Ovary (tissue), 10 donors: ENCODE measurements at regions of chr20 and their contacts with region 1.

Region 1: DNA sequence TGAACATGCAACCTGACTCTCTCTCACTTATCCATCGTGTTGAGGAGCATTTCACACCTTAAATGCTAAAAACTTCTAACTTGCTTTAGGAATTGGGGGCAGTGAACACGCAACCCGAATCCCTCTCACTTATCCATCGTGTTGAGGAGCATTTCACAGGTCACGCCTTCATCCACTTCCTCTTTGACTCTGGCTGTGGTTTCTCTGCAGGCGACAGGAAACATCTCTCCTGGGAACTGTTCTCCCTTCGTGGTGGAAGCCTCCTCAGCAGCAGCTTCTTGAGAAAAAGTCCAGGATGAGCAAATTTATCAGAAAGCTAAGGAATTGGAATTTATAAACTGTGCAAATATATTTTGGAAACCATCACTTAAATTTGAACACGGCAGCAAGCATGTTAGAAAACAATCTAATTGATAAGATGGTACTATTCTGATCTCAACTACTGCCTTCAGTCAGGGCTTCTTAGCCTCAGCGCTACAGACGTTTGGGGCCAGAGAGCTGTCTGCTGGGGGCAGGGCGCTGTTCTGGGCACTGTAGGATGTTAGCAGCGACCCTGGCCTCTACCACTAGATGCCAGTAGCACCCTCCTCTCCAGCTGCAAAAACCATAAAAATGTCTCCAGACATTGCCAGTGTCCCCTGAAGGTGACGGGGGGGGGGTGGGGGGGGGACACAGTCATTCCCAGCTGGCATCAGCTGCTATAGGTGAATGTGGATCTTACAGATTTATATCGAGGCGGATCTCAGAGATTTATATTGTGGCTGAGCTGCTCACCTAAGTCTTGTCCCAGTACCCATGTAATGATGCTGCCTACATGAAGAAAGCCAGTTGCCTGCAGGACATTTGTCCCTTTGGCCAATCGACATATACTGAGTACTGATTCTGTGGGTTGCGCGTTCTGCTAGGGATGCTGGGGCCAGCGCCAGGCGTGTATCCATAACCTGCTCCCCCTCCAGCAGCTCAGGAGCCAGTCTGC is 26.2 kb downstream of the CTCFL start:
- DNase-seq: no peak
- H3K4me3 ChIP-seq: no peak overlapping the region
- H3K27ac ChIP-seq: no peak overlapping the region
- H3K4me1 ChIP-seq: no peaks in the 10 kb centered on the region
- H3K27me3 ChIP-seq: no peaks in the 10 kb centered on the region
- CTCF ChIP-seq: no peak
- EP300 ChIP-seq: no peak
- POLR2A ChIP-seq: no peak

Region 2: DNA sequence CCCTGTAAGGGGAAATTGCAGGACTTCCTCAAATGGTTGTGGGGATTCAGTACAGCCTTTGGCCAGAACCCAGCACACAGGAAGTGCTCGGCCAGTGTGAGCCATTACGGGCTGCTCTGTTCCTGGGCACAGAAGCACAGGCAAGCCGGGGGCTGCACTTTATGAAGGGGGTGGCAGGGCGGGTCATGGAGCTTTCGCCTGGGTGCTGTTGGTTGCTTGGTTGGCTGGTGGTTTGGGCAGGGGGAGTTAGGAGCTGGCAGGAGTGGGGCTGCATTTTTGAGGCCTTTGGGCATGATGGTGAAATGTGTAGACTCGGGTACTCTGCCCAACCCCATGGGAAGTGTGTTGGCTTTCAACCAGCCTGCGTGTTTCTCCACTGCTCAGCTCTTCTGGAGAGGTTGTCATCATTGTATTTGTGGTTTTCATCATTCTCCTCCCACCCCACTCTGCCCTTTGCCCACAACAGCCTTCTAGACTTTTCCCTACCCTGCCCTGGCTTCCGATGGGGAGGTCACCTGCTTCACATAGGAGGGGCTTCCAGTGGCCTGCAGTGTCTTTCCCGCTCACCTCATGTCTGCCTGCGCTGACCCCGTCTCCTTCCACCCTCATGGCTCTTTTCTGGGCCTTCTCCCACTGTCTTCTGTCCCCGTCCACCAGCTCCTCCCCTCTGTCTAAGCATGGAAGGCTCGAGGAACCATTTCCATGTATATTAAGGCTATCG is 123.6 kb before region 1 on chr20:
- intact Hi-C with region 1: loop called in 3 of 4 experiments (anchors 2 to 5 kb)
- DNase-seq: no peak
- H3K4me3 ChIP-seq: no peak overlapping the region
- H3K27ac ChIP-seq: no peak overlapping the region
- H3K4me1 ChIP-seq: no peaks in the 10 kb centered on the region
- H3K27me3 ChIP-seq: no peaks in the 10 kb centered on the region
- CTCF ChIP-seq: no peak
- EP300 ChIP-seq: no peak
- POLR2A ChIP-seq: no peak

Region 3: DNA sequence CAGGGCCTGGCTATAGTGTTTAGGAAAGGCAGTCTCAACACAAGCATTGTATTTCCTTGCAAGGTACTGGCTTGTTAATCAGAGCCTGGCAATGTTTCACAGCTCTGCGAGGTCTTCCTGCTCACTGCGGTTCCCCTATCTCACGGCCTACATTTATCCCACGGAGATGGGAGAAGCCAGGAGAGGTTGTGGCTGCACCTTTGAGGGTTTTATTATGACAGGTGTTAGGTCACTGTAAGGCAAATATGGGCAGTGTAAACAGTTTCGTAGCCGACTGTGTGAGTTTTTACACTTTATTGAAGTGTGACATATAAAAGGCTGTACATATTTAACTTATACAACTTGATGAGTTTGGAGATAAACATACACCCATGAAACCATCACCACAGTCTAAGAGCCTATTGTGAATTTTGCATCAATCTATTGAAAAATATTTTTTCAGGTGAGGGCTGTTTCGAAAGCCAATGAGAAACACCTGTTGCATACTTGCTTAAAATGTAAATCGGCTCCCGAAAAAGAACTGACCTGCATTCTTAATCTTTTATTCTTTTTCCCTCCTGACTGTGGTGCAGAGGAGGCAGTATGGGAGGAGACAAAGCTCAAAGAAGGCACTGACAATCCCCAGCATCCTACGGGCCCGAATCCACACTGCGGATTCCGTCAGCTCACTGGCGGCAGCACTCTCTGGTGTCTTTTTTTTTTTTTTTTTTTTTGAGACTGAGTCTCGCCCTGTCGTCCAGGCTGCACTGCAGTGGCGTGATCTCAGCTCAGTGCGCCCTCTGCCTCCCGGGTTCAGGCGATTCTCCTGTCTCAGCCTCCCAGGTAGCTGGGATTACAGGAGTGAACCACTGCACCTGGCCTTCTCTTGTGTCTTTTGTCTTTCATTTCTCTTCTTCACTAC is 115.0 kb before region 1 on chr20:
- intact Hi-C with region 1: loop called (anchors 2 to 5 kb)
- DNase-seq: peak in 1 of 5 donors; percentile 8
- H3K4me3 ChIP-seq: no peak overlapping the region
- H3K27ac ChIP-seq: no peak overlapping the region
- H3K4me1 ChIP-seq: no peaks in the 10 kb centered on the region
- H3K27me3 ChIP-seq: no peaks in the 10 kb centered on the region
- CTCF ChIP-seq: no peak
- EP300 ChIP-seq: no peak
- POLR2A ChIP-seq: no peak

Region 4: GRCh38 chr20:57440678-57441520 is 57.8 kb before region 1 on chr20:
- intact Hi-C with region 1: loop called in 1 of 4 experiments (anchors 10 kb)
- DNase-seq: peak; percentile 71 to 90 (median 83)
- H3K4me3 ChIP-seq: no peak overlapping the region
- H3K27ac ChIP-seq: peak overlapping the region; percentile 65 to 81
- H3K4me1 ChIP-seq: peaks cover 24% of the 10 kb centered on the region
- H3K27me3 ChIP-seq: no peaks in the 10 kb centered on the region
- CTCF ChIP-seq: no peak
- EP300 ChIP-seq: no peak
- POLR2A ChIP-seq: no peak